A549 (cell line): ENCODE measurements at regions of chr9 and their contacts with region 1.

Region 1: DNA sequence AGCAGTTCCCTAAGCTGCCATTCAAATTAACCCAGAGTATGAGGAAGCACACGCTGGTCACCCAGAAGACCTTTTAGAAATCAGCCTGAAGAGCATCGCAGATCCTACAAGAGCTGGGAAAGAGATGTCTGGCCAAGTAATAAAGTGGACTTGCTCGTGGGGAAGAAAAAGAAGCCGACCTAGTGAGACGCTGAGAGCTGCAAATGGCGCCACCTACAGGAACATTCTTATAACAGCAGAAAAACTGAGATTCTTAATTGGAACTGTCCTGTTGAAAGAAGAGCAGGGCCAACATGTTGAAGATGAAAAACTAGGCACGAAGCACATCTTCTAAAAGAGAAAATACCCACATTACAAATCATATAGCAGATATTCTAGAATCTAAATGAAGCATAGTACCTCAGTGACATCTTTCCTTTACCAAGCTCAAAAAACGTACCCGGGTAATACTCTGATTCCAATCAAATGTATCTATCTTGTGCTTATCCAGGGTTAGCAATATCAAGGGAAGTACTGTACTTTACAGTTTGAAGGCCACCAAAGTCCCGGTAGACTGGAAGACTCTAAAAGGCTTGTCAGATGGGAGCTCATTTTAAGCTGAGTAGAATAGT is 3.9 kb upstream of the GNAQ start:
- DNase-seq: peak; percentile 40 to 80
- ATAC-seq: peak in 1 of 2 experiments; percentile 27; a peak in 3 of 6 replicates
- H3K4me3 ChIP-seq: no peak overlapping the region
- H3K27ac ChIP-seq: 0 out of 6 replicates have a peak overlapping the region, but pooled peaks of 1 of the 2 experiments have one; percentile 38
- H3K4me1 ChIP-seq: peaks cover 21% of the 10 kb centered on the region
- CTCF ChIP-seq: peak; percentile 93
- EP300 ChIP-seq: no peak
- POLR2A ChIP-seq: no peak
- RAD21 ChIP-seq: peak; percentile 88 to 90

Region 2: GRCh38 chr9:77433675-77434445 is 601.6 kb before region 1 on chr9:
- CTCF ChIA-PET with region 1: interaction called, 25 read pairs
- POLR2A ChIA-PET with region 1: no interaction called
- DNase-seq: peak; percentile 67 to 85
- ATAC-seq: peak; percentile 92 to 98
- H3K4me3 ChIP-seq: no peak overlapping the region
- H3K27ac ChIP-seq: no peak overlapping the region
- H3K4me1 ChIP-seq: no peaks in the 10 kb centered on the region
- CTCF ChIP-seq: peak; percentile 96
- EP300 ChIP-seq: no peak
- POLR2A ChIP-seq: no peak
- RAD21 ChIP-seq: peak; percentile 94 to 95

Region 3: DNA sequence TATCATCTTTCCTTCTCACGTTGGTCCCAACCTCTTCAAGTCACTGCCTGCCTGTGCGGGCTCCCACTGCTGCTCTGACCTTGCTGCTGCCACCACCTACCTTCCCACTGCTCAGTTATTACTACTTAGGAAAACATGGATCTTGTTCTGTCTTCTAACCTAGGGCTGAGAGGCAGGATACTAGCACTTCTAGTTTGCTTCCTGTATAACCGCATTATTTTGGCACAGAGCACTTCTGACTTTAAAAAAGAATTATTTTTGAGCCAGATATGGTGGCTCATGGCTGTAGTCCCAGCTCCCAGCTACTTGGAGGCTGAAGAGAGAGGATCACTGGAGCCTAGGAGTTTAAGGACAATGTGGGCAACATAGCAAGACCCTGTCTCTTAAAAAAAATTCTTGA is 252.0 kb before region 1 on chr9:
- CTCF ChIA-PET with region 1: no interaction called
- POLR2A ChIA-PET with region 1: no interaction called
- DNase-seq: no peak
- ATAC-seq: no peak
- H3K4me3 ChIP-seq: no peak overlapping the region
- H3K27ac ChIP-seq: no peak overlapping the region
- H3K4me1 ChIP-seq: no peaks in the 10 kb centered on the region
- CTCF ChIP-seq: no peak
- EP300 ChIP-seq: no peak
- POLR2A ChIP-seq: no peak
- RAD21 ChIP-seq: no peak

Region 4: GRCh38 chr9:77793904-77794303 is 241.6 kb before region 1 on chr9:
- CTCF ChIA-PET with region 1: interaction called, 17 read pairs
- POLR2A ChIA-PET with region 1: no interaction called
- DNase-seq: peak in 1 of 2 experiments; percentile 39
- ATAC-seq: peak; percentile 62 to 77; a peak in 4 of 6 replicates
- H3K4me3 ChIP-seq: no peak overlapping the region
- H3K27ac ChIP-seq: no peak overlapping the region
- H3K4me1 ChIP-seq: peaks cover 30% of the 10 kb centered on the region
- CTCF ChIP-seq: no peak
- EP300 ChIP-seq: no peak
- POLR2A ChIP-seq: no peak
- RAD21 ChIP-seq: no peak

Region 5: DNA sequence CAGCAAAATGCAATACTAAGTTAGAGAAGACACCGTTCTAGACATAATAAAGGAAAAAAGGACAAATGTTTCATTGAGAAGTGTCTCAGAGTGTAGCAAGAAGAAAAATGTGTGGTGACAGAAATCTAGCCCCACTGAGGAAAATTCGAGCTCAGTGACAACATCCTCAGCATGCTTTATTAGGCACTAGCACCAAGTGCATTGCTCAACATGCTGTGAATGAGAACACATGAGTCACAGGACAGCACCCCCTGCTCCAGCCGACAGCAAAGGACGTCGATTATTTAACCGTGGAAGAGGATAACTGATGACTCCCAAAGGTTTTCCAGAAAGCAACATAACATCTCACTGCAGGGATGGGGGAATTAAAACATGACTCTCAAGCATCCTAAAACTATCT is 186.6 kb before region 1 on chr9:
- CTCF ChIA-PET with region 1: interaction called, 13 read pairs
- POLR2A ChIA-PET with region 1: no interaction called
- DNase-seq: peak; percentile 39 to 47
- ATAC-seq: peak; percentile 86 to 87
- H3K4me3 ChIP-seq: no peak overlapping the region
- H3K27ac ChIP-seq: no peak overlapping the region; a peak in 3 of 6 replicates
- H3K4me1 ChIP-seq: peaks cover 32% of the 10 kb centered on the region
- CTCF ChIP-seq: no peak
- EP300 ChIP-seq: no peak
- POLR2A ChIP-seq: no peak
- RAD21 ChIP-seq: no peak

Region 6: GRCh38 chr9:77977210-77977611 is 58.3 kb before region 1 on chr9:
- CTCF ChIA-PET with region 1: interaction called, 57 read pairs
- POLR2A ChIA-PET with region 1: interaction called, 9 read pairs
- DNase-seq: peak; percentile 16 to 71
- ATAC-seq: peak in 1 of 2 experiments; percentile 77; a peak in 4 of 6 replicates
- H3K4me3 ChIP-seq: no peak overlapping the region
- H3K27ac ChIP-seq: 0 out of 6 replicates have a peak overlapping the region, but pooled peaks of 1 of the 2 experiments have one; percentile 14
- H3K4me1 ChIP-seq: peaks cover 47% of the 10 kb centered on the region
- CTCF ChIP-seq: peak; percentile 57
- EP300 ChIP-seq: no peak
- POLR2A ChIP-seq: no peak
- RAD21 ChIP-seq: peak; percentile 66 to 68

Region 7: DNA sequence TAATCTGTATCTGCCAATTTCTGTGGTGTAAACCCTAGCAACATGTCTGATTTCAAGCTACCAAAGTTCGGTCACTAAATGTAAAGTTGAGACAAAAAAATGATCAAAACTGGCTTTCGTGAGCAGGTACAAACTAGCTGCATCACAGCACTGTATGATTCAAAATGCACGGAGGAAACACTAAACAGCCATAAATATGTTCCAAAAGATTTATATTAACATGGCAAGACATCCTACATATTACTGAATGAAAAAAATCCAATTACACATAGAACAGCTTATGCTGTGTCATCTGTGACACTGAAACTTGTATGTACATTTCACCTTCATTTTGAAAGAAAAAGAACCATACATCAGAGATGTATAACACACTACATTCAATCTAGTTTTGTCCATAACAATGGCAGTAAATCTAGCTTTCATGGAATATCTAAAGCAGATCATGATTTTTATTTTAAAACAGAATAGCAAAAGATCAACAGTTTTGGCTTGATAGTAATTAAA is 18.2 kb before region 1 on chr9:
- CTCF ChIA-PET with region 1: interaction called, 12 read pairs
- POLR2A ChIA-PET with region 1: no interaction called
- DNase-seq: no peak
- ATAC-seq: no peak
- H3K4me3 ChIP-seq: no peak overlapping the region
- H3K27ac ChIP-seq: no peak overlapping the region
- H3K4me1 ChIP-seq: peaks cover 14% of the 10 kb centered on the region
- CTCF ChIP-seq: no peak
- EP300 ChIP-seq: no peak
- POLR2A ChIP-seq: no peak
- RAD21 ChIP-seq: no peak

Region 8: GRCh38 chr9:78053627-78054026 is 18.1 kb after region 1 on chr9:
- CTCF ChIA-PET with region 1: interaction called, 30 read pairs
- POLR2A ChIA-PET with region 1: no interaction called
- DNase-seq: no peak
- ATAC-seq: no peak
- H3K4me3 ChIP-seq: no peak overlapping the region
- H3K27ac ChIP-seq: no peak overlapping the region
- H3K4me1 ChIP-seq: no peaks in the 10 kb centered on the region
- CTCF ChIP-seq: no peak
- EP300 ChIP-seq: no peak
- POLR2A ChIP-seq: no peak
- RAD21 ChIP-seq: no peak

Region 9: DNA sequence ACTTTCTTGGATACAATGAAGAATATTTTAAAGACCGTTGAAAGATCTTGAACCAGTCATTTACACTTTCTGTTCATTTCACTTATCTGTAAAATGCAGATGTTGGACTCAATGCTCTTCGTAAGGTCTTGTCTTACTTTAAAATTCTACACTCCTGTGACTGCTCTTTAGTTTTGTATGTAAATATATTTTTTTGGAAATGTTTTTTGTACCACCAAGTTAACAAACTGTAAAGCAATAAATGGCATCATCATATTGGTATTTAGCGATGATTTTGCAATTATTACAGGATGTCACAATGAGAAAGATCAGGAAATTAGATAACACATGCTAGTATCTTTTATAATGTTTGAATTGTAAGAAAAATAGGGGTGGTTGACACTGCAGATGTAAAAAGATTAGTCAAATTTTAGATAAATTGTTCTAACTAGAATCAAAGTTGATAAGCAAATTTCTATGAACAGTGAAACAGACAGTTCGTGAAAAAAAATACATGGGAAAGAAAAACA is 77.0 kb after region 1 on chr9:
- CTCF ChIA-PET with region 1: no interaction called
- POLR2A ChIA-PET with region 1: no interaction called
- DNase-seq: no peak
- ATAC-seq: no peak
- H3K4me3 ChIP-seq: no peak overlapping the region
- H3K27ac ChIP-seq: no peak overlapping the region
- H3K4me1 ChIP-seq: no peaks in the 10 kb centered on the region
- CTCF ChIP-seq: no peak
- EP300 ChIP-seq: no peak
- POLR2A ChIP-seq: no peak
- RAD21 ChIP-seq: no peak

Region 10: GRCh38 chr9:78196258-78196657 is 160.8 kb after region 1 on chr9:
- CTCF ChIA-PET with region 1: no interaction called
- POLR2A ChIA-PET with region 1: no interaction called
- DNase-seq: no peak
- ATAC-seq: no peak
- H3K4me3 ChIP-seq: no peak overlapping the region
- H3K27ac ChIP-seq: no peak overlapping the region
- H3K4me1 ChIP-seq: peaks cover 4% of the 10 kb centered on the region; the same call in 1 of the 3 replicates
- CTCF ChIP-seq: no peak
- EP300 ChIP-seq: no peak
- POLR2A ChIP-seq: no peak
- RAD21 ChIP-seq: no peak